ENCODE measurements at regions of chr12 and their contacts with region 1.

Region 1: DNA sequence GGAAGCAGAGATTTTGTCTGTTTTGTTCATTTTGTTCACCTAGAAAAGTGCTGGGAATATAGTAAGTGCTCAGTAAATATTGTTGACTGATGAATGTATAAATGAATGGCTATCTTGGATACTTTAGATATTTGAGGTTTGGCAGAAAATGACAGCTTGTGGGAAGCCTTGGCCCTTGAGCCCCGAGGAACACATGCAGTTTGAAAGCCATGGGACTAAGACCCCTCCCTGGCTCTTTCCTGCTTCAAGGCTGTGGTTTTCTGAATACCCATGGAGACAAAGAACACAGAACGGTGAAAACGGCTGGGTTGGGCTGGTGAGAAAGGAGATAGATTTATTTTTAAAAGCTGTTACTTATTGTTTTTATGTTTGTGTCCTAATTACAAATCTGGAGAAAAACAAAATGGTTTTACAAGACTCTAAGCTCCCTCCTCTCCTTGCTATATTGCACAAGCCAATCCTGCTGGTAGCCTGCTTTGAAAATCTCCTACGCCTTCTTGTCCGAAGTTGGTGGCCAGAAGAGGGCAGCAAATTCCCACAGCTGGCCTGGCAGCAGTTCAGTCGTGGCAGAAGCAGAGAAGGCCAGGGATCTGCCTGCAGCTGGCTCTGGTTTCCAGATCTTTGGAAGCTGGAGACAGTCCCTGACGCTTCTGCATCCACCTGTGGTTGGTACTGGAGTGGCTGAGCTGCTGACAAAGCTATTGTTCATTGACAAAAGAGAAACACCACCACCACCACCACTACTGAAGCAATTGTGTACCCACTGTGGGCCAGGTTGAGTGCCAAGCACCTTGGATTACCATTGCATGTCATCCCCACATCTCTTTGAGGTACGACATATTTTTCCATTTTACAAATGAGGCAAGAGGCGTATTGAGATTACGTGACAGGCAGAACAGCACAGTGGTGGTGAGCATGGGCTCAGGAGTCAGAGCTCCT is 5.2 kb upstream of the KRT85 start:
- DNase-seq: peak; percentile 88 to 95
- H3K4me3 ChIP-seq: no peak overlapping the region
- H3K27ac ChIP-seq: peak overlapping the region in 1 of 5 donors; percentile 9
- H3K4me1 ChIP-seq: peaks cover 0 to 15% (median 5%) of the 10 kb centered on the region in 4 donors
- H3K27me3 ChIP-seq: peaks cover 0 to 3% (median 0%) of the 10 kb centered on the region in 3 donors
- CTCF ChIP-seq: peak in 5 of 7 experiments; percentile 62 to 78 (median 76)
- EP300 ChIP-seq: no peak
- POLR2A ChIP-seq: no peak

Region 2: DNA sequence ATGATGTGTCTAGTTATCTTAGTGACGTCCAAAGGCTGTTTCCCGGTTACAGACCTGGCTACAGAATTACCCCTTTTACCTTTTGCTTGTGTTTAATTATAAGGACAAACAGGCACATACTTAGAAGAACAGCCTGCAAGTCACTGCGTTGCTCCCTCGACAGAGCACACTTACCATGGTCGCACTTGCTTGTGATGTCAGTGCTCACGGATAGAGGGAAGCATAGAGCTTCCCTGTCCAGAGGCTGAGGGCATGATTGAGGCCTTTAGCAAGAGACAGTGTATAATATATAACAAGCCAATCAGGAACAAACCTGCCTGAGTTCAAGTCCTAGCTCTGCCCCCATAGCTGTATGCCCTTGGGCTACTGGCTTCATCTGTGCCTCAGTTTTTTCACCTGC is 854.7 kb before region 1 on chr12:
- intact Hi-C with region 1: no loop called
- DNase-seq: no peak
- H3K4me3 ChIP-seq: no peak overlapping the region
- H3K27ac ChIP-seq: no peak overlapping the region
- H3K4me1 ChIP-seq: no peaks in the 10 kb centered on the region
- H3K27me3 ChIP-seq: no peaks in the 10 kb centered on the region
- CTCF ChIP-seq: no peak
- EP300 ChIP-seq: no peak
- POLR2A ChIP-seq: no peak

Region 3: GRCh38 chr12:52865090-52865944 is 492.8 kb after region 1 on chr12:
- intact Hi-C with region 1: loop called (anchors 5 kb)
- DNase-seq: peak; percentile 78 to 89
- H3K4me3 ChIP-seq: no peak overlapping the region
- H3K27ac ChIP-seq: no peak overlapping the region
- H3K4me1 ChIP-seq: peaks cover 0 to 15% (median 9%) of the 10 kb centered on the region in 4 donors
- H3K27me3 ChIP-seq: no peaks in the 10 kb centered on the region
- CTCF ChIP-seq: peak in 5 of 7 experiments; percentile 69 to 78 (median 73)
- EP300 ChIP-seq: no peak
- POLR2A ChIP-seq: no peak

Region 4: DNA sequence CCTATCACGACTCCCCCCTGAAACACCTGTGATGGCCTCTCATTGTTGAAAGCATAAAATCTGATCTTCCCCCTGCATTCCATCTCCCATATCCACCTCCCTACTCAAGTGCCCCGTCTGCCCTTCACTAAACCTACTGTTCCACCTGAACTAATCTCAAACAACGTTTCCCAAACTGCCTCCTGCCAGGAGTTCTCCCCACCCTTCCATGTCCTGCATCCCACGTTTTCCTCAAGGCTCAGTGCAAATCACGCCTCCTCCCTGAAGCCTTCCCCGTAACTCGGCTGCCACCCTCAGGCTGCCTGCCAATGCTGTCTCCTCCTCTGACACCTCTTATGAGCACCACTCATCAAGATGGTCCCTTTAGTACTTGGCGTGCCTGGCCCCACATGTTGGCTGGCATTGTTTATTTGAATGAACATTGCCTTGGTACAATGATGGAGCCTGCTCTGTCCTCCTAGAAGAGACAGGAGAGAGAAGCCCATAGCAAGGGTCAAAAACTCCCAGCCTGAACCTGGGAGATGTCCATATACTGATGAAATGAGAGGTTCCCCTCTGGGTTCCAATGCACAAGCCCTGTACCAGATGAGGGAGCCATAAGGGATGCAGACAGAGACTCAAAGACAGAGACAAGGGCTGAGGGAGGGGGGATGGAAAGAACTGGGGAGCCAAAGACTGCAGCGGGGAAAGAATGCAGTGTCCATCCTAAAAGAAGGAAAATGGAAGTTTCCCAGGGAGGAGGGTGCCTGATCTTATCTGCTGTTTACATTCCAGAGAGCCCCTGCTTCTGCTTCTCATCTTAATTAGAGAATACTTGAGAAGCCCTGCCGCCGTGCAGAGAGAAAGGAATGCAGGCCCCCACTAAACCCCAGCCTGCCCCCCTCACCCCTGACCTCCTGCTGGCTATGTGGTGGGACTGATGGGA is 603.9 kb after region 1 on chr12:
- intact Hi-C with region 1: loop called (anchors 10 kb)
- DNase-seq: peak; percentile 66 to 75
- H3K4me3 ChIP-seq: no peak overlapping the region
- H3K27ac ChIP-seq: no peak overlapping the region
- H3K4me1 ChIP-seq: peaks cover 0 to 17% (median 9%) of the 10 kb centered on the region in 4 donors
- H3K27me3 ChIP-seq: peaks cover 0 to 10% (median 0%) of the 10 kb centered on the region in 3 donors
- CTCF ChIP-seq: peak in 1 of 7 experiments; percentile 31
- EP300 ChIP-seq: no peak
- POLR2A ChIP-seq: no peak